HCT116 (cell line): ENCODE measurements at regions of chr17 and their contacts with region 1.

Region 1: DNA sequence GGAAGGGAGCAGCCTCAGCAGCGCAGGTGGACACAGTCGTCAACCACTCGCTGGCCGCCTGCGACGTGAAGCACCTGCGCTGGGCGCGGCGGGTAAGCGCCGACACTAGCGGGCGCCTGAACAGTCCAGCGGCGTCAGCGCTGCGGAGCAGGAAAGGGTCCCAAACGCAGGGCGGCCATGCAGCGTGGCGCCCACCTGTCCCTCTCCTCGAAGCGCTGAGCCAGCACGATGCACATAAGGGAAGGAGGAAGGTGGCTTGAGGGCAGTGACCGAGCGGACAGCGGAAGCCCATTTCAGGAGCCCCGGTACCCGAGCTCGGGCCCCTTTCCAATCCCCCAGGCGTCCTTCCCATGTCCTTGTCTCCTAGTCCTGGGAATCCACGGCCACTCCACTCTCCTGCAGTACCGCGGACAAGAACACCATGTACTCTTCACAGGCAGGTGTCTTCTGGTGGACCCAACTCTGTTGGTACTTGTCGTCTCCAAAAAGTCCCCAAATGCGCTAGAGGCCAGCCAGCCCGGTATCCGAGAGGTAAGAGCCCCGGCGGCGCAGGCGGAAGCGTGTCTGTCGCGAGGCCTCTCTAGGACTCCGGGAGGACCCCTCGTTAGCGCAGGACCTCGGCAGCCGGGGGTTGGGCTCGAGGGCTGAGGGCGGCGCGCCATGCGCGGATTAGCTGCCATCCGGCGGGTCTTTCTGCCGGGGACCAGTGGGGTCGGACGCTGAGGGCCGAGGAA is 14.4 kb downstream of the ZNF232 start:
- DNase-seq: no peak
- ATAC-seq: no peak
- H3K4me3 ChIP-seq: no peak overlapping the region
- H3K27ac ChIP-seq: no peak overlapping the region
- H3K4me1 ChIP-seq: no peaks in the 10 kb centered on the region
- H3K27me3 ChIP-seq: no peaks in the 10 kb centered on the region
- CTCF ChIP-seq: no peak
- POLR2A ChIP-seq: no peak
- RAD21 ChIP-seq: no peak

Region 2: DNA sequence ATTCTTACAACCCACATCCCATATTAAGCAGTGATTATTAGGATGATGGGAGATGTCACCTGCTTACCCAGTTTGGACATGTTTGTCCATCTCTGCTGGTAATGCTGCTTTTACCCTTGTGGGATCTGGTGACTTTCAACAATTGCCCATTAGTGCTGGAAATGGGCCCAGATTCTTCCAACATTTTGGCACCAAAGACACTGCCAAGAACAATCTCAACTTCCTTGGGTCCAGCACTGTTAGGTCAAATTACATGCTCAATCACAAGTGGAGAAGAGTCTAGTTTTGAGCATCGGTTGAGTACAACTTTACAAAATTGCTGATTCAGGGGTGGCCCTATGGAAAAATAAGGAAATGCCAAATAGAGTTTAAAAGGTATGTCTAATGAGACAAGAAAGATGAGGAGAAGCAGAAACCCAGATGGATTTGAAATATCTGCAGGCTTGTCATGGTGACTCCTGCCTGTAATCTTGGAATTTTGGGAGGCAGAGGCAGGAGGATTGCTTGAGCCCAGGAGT is 32.0 kb before region 1 on chr17:
- CTCF ChIA-PET with region 1: no interaction called
- POLR2A ChIA-PET with region 1: no interaction called
- RAD21 ChIA-PET with region 1: no interaction called
- intact Hi-C with region 1: no loop called
- DNase-seq: no peak
- ATAC-seq: no peak
- H3K4me3 ChIP-seq: no peak overlapping the region
- H3K27ac ChIP-seq: no peak overlapping the region
- H3K4me1 ChIP-seq: no peaks in the 10 kb centered on the region
- H3K27me3 ChIP-seq: no peaks in the 10 kb centered on the region
- CTCF ChIP-seq: no peak
- POLR2A ChIP-seq: no peak
- RAD21 ChIP-seq: no peak

Region 3: DNA sequence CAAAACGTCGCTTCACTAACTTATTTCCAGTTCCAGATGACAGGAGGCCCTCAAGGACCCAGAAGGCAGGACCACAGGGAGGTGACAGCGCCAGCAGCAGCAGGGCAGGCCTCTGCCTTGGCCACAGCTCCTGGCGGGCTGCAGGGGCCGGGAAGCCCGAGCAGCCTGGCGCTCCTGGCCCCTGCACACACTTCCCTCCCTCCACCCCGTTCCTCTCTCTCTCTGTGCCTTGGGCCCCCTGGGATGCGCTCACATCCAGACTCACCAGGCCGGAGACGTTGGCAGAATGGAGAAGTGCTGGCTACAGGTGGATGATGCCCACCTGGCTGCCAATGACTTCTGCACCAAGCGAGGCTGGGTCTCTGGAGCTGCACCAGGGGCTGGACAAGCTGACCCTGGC is 81.7 kb after region 1 on chr17:
- CTCF ChIA-PET with region 1: no interaction called
- POLR2A ChIA-PET with region 1: no interaction called
- RAD21 ChIA-PET with region 1: no interaction called
- intact Hi-C with region 1: loop called (anchors 10 kb)
- DNase-seq: no peak
- ATAC-seq: no peak
- H3K4me3 ChIP-seq: no peak overlapping the region
- H3K27ac ChIP-seq: no peak overlapping the region
- H3K4me1 ChIP-seq: no peaks in the 10 kb centered on the region
- H3K27me3 ChIP-seq: no peaks in the 10 kb centered on the region
- CTCF ChIP-seq: no peak
- POLR2A ChIP-seq: no peak
- RAD21 ChIP-seq: no peak